BJ (cell line): ENCODE measurements at regions of chr5 and their contacts with region 1.

Region 1: GRCh38 chr5:173592050-173592669 is 24.3 kb downstream of the BOD1 start:
- DNase-seq: no peak
- H3K4me3 ChIP-seq: no peak overlapping the region
- H3K27me3 ChIP-seq: no peaks in the 10 kb centered on the region
- CTCF ChIP-seq: peak; percentile 40; the same call in 1 of the 2 replicates

Region 2: DNA sequence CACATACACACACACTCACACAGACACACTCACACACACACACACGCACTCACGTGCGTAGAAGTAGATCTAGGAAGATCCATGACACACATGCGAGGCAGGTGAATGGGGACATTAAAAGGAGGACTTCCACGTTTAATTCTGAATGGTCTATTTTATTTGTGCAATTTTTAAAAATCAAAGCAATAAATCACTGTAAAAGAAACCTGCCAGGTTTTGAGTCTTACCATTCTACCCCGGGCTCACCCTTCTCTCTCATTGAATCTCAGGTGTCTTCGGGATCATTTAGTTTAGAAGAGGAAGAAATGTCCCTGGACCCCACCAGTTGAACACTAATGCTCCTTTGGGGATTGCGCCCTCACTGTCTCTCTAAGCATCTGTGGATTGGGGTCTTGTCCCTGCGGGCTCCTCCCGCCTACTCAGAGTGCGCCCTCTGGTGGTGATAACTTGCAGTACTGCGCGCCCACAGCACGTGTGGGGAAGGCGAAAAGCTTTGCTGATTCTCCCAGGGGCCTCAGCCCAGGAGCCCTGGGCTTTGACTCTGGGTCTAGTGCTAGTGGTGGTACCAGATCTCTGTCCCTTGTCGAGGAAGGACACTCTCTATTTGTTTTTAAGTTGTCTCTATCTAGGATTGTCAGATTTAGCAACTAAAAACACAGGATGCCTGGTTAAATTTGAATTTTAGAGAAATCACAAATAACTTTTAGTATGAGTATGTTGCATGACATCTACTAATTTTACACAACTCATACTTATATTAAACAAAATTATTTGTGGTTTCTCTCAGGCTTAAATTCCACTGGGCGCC is 10.5 kb before region 1 on chr5:
- CTCF ChIA-PET with region 1: interaction called, 13 read pairs
- POLR2A ChIA-PET with region 1: no interaction called
- DNase-seq: no peak
- H3K4me3 ChIP-seq: no peak overlapping the region
- H3K27me3 ChIP-seq: no peaks in the 10 kb centered on the region
- CTCF ChIP-seq: peak; percentile 80

Region 3: DNA sequence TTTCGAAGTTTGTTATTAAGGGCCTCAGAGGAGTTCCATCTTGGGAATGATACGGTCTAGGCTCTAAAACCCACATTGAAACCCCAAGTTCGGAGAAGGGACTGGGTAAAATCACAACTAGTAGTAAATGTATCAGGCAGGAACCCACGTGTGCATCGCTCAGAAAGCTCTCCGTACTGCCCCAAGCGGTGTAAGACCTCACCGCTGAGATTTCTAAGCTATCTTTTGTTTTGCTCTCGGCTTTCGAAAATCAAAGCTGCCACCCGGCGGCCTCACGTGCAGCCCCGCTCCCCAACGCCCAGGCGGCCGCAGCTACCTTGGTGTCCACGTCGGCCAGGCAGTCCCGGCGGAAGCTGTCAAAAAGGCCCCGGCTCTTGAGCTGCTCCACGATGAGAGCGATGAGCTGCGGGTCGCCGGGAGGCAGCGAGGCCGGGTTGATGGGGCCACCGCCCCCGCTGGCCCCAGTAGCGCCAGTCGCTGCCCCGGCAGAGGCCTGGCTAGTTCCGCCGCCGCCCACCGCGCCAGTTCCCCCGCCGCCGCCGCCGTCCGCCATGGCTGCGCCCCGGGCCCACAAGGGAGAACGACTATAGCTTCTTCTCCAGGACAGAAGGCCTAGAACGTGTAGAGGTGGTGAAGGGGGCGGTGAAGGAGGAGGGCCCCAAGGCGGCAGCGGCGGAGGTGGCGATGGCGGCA is 23.9 kb after region 1 on chr5:
- CTCF ChIA-PET with region 1: no interaction called
- POLR2A ChIA-PET with region 1: no interaction called
- DNase-seq: peak; percentile 20
- H3K4me3 ChIP-seq: peak overlapping the region; percentile 65
- H3K27me3 ChIP-seq: no peaks in the 10 kb centered on the region
- CTCF ChIP-seq: peak; percentile 83